CD14-positive monocyte (primary cell): ENCODE measurements at regions of chr15 and their contacts with region 1.

Region 1: GRCh38 chr15:67884514-67885487 is 45.0 kb upstream of the RNU6-1 start:
- DNase-seq: peak; percentile 25 to 32 (median 29)
- H3K4me3 ChIP-seq: peak overlapping the region; percentile 38 to 83 (median 48)
- H3K4me3 Mint-ChIP-seq: peak overlapping the region; percentile 87 to 90
- H3K27ac ChIP-seq: peak overlapping the region; percentile 59 to 81
- H3K27ac Mint-ChIP-seq: peak overlapping the region; percentile 16 to 88 (median 81)
- H3K4me1 ChIP-seq: peaks cover 55 to 59% of the 10 kb centered on the region in 2 donors
- H3K4me1 Mint-ChIP-seq: peaks cover 67% of the 10 kb centered on the region
- H3K27me3 ChIP-seq: no peaks in the 10 kb centered on the region
- H3K27me3 Mint-ChIP-seq: peaks cover 0 to 3% (median 2%) of the 10 kb centered on the region in 3 donors
- CTCF ChIP-seq: no peak

Region 2: DNA sequence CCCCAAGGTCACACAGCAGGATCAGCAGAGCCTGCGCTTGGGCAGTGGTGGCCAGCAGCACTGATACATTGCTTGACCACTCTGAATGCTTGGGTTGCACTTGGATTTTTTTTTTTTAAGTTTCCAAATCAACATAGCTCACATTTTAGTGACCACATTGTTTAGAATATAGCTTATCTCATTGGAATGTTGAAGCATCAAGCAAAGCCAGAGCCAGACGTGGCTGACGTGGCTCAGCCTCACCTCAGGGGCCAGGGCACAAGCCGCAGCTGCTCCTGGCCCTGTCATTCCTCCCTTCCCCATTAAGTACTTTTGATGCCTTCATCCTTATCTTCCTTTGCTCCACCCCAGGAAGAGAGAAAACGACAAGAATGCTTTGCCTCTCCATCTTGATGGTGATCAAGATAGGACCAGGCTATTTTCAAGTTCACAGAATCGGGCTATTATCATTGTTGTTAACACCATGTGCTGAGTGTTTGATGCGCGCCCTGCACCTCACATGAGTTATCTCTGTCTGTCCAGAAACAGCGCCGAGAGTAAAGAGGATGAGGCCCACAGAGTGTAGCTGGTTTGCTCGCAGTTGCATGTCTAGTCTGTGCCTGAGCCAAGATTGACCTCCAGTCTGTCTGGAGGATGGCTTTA is 706.1 kb before region 1 on chr15:
- intact Hi-C with region 1: no loop called
- DNase-seq: no peak
- H3K4me3 ChIP-seq: no peak overlapping the region
- H3K4me3 Mint-ChIP-seq: no peak overlapping the region
- H3K27ac ChIP-seq: peak overlapping the region in 1 of 2 donors; percentile 16
- H3K27ac Mint-ChIP-seq: peak overlapping the region in 1 of 7 donors; percentile 3
- H3K4me1 ChIP-seq: peaks cover 42 to 44% of the 10 kb centered on the region in 2 donors
- H3K4me1 Mint-ChIP-seq: peaks cover 44% of the 10 kb centered on the region
- H3K27me3 ChIP-seq: no peaks in the 10 kb centered on the region
- H3K27me3 Mint-ChIP-seq: peaks cover 0 to 5% (median 2%) of the 10 kb centered on the region in 3 donors
- CTCF ChIP-seq: no peak

Region 3: GRCh38 chr15:67945951-67946700 is 61.3 kb after region 1 on chr15:
- intact Hi-C with region 1: loop called in 1 of 2 experiments (anchors 10 kb)
- DNase-seq: no peak
- H3K4me3 ChIP-seq: no peak overlapping the region
- H3K4me3 Mint-ChIP-seq: no peak overlapping the region
- H3K27ac ChIP-seq: no peak overlapping the region
- H3K27ac Mint-ChIP-seq: no peak overlapping the region
- H3K4me1 ChIP-seq: no peaks in the 10 kb centered on the region
- H3K4me1 Mint-ChIP-seq: peaks cover 5% of the 10 kb centered on the region
- H3K27me3 ChIP-seq: no peaks in the 10 kb centered on the region
- H3K27me3 Mint-ChIP-seq: peaks cover 0 to 5% (median 0%) of the 10 kb centered on the region in 3 donors
- CTCF ChIP-seq: no peak